ENCODE measurements at regions of chr6 and their contacts with region 1.

Region 1: DNA sequence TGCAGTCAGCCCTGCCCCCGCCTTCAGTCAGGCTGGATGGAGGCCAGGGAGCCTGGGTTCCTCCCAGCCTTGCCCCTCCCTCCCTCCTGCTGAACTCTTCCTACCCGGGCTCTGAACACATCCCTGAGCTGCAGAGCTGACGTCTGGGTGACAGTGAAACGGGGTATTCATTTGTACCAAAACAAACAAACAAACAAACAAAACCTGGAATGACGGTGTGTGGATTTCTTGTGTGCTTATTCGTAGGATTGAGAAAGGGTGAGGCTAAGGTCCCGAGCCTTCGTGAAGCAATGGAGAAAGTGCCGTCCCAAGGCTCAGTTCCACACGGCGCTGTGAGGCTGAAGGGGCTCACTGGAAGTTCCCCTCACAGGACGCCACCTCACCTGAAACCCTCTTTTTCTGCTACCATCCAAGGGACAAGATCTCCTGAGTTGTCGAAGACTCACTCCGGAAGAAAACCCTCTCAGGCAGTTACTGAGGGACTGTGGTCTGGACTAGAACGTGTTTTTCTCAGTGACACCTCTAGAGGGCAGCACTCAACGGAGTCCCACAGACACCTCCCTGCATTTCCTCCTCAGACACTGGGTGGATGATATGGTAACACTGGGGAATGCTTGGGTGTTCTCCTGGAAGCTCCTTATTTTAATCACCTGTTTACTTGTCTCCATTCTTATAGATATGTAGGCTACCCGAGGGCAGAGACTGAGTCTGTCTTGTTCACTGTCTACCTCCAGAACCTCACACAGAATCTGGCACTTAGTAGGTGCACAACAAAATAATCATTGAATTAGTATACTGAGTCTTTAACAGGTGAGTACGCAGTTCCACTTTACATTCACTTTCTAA is 27.3 kb downstream of the GSTA3 start:
- DNase-seq: peak; percentile 65 to 81
- ATAC-seq: peak; percentile 95
- H3K4me3 ChIP-seq: peak overlapping the region; percentile 43 to 53
- H3K27ac ChIP-seq: peak overlapping the region in 1 of 2 donors; percentile 35
- H3K4me1 ChIP-seq: no peaks in the 10 kb centered on the region
- H3K27me3 ChIP-seq: no peaks in the 10 kb centered on the region

Region 2: GRCh38 chr6:53064726-53065215 is 182.6 kb after region 1 on chr6:
- intact Hi-C with region 1: loop called in 1 of 2 experiments (anchors 1 kb)
- DNase-seq: peak; percentile 97 to 99
- ATAC-seq: peak; percentile 95
- H3K4me3 ChIP-seq: peak overlapping the region; percentile 82 to 90
- H3K27ac ChIP-seq: peak overlapping the region; percentile 15 to 79
- H3K4me1 ChIP-seq: peaks cover 0 to 5% of the 10 kb centered on the region in 2 donors
- H3K27me3 ChIP-seq: no peaks in the 10 kb centered on the region

Measured in aorta (tissue), 5 donors.